GM18951 (cell line): ENCODE measurements at regions of chr7 and their contacts with region 1.

Region 1: GRCh38 chr7:134954197-134955082 is 31.9 kb upstream of the AGBL3 start:
- POLR2A ChIP-seq: no peak

Region 2: DNA sequence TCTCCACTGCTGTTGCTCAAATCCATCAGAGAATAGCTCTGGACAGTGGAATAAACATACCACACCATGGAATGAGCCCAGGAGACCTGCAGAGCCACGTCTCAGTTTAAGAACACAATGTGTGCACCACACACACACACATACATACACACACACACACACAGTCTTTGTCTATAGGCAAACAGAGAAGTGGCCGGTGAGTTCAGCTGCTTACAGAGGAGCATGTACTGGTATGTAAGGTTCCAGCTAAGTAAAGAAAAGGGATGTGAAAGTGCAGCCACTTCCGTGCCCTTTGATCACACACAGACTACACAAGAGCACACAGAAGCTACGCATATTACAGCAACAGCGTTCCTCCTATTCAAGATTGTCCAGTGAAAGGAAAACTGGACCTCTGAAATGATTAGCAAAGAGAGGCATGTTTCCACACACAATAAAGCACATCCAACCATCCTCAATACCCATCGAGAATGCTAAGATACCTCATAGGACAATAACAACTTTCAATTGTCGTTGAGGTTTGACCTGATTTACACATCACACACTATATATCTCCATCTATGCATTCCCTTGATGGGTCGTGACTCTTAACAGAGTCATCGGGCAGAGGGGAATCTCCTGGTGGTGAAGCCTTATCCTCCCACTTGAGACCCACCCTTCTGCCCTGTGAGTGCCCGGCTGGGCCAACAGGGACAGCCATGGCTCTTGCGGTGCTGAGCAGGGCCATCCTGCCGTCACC is 661.3 kb before region 1 on chr7:
- in situ Hi-C with region 1: no loop called
- POLR2A ChIP-seq: no peak

Region 3: DNA sequence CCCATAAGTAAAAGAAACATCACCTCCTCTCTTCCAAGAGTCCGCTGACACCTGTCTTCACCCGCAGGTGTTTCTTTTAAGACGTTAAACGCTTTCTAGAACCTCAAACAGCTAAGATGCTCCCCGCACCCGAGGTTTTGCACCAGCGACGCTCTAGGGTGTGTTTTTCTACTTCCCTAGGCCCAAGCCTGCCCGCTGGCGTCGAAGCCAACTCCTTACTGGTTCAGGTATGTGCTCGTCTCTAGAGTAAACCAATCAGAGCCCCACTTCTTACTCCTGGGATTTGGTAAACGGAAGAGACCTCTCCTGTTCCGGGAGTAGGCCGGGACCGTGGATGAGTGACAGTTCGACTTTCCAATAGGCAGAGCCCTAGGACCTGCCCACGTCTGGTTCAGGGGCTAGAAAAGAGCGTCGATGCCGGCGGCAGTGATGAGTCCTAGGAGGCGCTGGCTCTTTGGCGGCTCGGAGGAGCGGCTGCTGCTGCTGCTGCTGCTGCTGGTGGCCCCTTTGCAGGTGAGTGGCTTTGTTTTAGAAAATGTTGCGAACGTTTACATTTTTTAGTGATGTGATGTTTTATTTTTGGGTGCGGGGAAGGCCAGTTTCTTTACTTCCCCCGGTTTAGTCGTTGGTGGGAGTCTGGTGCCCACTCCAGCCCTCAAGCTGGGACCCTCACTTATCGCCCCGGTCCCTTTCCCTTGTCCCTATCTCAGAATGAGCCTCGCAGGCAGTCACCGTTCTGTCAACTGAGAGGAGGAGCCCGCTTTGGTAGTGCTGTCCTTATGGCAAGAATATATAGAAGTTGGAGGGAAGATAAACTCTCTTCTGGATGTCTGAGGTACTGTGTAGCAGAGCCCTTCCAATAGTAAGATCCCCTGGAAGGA is 307.8 kb before region 1 on chr7 and contains the start of gene BPGM:
- in situ Hi-C with region 1: loop called (anchors 25 kb)
- POLR2A ChIP-seq: peak; percentile 97

Region 4: DNA sequence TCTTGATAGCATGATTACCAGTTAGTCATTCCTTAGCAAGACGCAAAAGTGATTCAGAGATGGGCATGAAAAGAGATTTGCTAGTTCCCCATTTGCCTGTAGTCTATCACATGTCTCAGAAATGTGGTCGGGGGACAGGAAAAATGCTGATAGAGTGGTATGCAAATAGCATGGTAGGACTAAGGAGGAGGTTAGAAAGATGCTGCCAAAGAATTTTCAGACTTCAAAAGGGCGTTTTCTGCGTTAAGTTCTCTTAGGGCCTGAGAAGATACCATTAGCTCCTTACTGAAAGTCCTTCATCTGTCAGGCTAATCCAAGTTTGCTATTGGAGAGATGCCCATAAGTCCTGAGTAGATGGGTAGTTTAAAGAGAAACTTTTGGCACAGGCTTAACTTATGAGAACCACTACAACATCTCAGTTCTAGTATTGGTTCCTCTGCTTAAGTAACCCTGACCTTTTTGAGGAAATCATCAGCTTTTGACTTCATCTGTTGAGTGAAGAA is 172.3 kb before region 1 on chr7:
- in situ Hi-C with region 1: no loop called
- POLR2A ChIP-seq: no peak